ENCODE measurements at regions of chr3 and their contacts with region 1.

Region 1: GRCh38 chr3:170961616-170962400 is 53.4 kb upstream of the EIF5A2 start:
- DNase-seq: peak; percentile 30 to 72
- H3K4me3 ChIP-seq: no peak overlapping the region; the same call in 1 of the 2 replicates
- H3K27ac ChIP-seq: peak overlapping the region; percentile 10
- H3K4me1 ChIP-seq: peaks cover 10% of the 10 kb centered on the region
- H3K27me3 ChIP-seq: no peaks in the 10 kb centered on the region
- CTCF ChIP-seq: peak; percentile 98

Region 2: GRCh38 chr3:170977911-170978310 is 16.1 kb after region 1 on chr3:
- CTCF ChIA-PET with region 1: no interaction called
- POLR2A ChIA-PET with region 1: no interaction called
- intact Hi-C with region 1: no loop called
- DNase-seq: no peak
- H3K4me3 ChIP-seq: no peak overlapping the region
- H3K27ac ChIP-seq: no peak overlapping the region
- H3K4me1 ChIP-seq: no peaks in the 10 kb centered on the region
- H3K27me3 ChIP-seq: no peaks in the 10 kb centered on the region
- CTCF ChIP-seq: no peak

Region 3: DNA sequence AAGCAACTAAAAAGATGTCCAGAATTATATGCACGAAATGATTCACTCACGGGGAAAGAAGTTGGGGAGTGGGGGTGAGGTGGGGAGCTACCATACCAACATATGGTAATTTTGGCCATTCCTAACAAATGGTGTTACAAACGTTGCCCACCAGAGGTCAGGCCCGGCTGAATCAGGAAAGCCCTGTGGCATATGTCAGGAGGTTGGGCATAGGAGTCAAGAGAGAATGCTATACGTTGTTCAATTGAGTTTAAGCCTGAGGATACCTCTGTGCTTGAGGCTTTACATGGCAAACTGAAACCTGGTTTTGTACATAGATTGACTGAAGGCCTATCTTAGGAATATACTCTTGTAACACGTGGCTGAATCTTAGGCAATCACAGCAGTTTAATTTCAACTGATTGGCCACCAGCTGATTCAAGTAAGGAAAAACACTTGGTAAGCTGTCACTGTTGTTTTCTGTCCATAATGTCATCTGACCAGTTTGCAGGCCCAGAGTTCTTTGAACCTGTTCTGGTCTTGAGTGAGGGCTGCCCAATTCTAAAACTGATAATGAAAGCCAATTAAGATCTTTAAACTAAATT is 88.1 kb after region 1 on chr3:
- CTCF ChIA-PET with region 1: no interaction called
- POLR2A ChIA-PET with region 1: no interaction called
- intact Hi-C with region 1: loop called (anchors 5 kb)
- DNase-seq: peak; percentile 53 to 64
- H3K4me3 ChIP-seq: no peak overlapping the region
- H3K27ac ChIP-seq: no peak overlapping the region
- H3K4me1 ChIP-seq: peaks cover 24% of the 10 kb centered on the region
- H3K27me3 ChIP-seq: no peaks in the 10 kb centered on the region
- CTCF ChIP-seq: peak; percentile 86

Region 4: GRCh38 chr3:171187706-171188290 is 226.0 kb after region 1 on chr3:
- CTCF ChIA-PET with region 1: no interaction called
- POLR2A ChIA-PET with region 1: no interaction called
- intact Hi-C with region 1: loop called (anchors 10 kb)
- DNase-seq: peak in 1 of 2 experiments; percentile 50
- H3K4me3 ChIP-seq: no peak overlapping the region
- H3K27ac ChIP-seq: no peak overlapping the region
- H3K4me1 ChIP-seq: peaks cover 44% of the 10 kb centered on the region
- H3K27me3 ChIP-seq: no peaks in the 10 kb centered on the region
- CTCF ChIP-seq: peak; percentile 81

Region 5: DNA sequence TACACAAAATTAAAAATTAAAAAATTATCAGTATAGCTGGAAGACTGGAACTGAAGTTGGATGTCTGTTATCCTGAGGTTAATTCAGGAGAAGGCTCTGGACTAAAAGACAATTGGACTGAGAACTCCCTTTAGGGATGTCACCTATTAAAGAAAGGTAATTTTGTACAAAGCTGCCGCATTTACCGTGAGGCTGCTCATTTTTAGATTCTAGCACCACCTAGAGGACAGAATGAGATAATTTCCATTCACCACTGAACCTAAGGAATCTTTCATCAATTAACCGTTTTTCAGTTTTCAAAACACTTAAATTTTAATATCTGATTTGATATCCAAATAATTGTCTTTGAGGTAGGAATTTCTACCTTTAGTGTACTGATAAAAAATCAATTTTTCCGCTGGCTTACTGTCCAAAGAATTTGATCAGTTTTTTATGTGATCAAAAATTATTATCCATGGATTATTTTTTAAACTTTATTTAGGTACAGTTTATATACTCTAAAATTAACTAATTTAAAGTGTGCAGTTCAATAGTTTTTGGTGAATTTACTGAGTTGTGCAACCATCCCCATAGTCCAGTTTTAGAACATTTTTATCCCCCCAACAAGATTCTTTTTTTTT is 605.1 kb after region 1 on chr3:
- CTCF ChIA-PET with region 1: interaction called, 9 read pairs
- POLR2A ChIA-PET with region 1: interaction called, 5 read pairs
- intact Hi-C with region 1: loop called (anchors 1 kb)
- DNase-seq: peak in 1 of 2 experiments; percentile 45
- H3K4me3 ChIP-seq: no peak overlapping the region
- H3K27ac ChIP-seq: no peak overlapping the region
- H3K4me1 ChIP-seq: peaks cover 30% of the 10 kb centered on the region
- H3K27me3 ChIP-seq: no peaks in the 10 kb centered on the region
- CTCF ChIP-seq: peak; percentile 96

Region 6: GRCh38 chr3:171829841-171830517 is 868.2 kb after region 1 on chr3:
- CTCF ChIA-PET with region 1: interaction called, 13 read pairs
- POLR2A ChIA-PET with region 1: no interaction called
- intact Hi-C with region 1: loop called (anchors 1 kb)
- DNase-seq: peak; percentile 54 to 77
- H3K4me3 ChIP-seq: no peak overlapping the region
- H3K27ac ChIP-seq: no peak overlapping the region
- H3K4me1 ChIP-seq: peaks cover 26% of the 10 kb centered on the region
- H3K27me3 ChIP-seq: no peaks in the 10 kb centered on the region
- CTCF ChIP-seq: peak; percentile 77

Region 7: GRCh38 chr3:172341482-172342059 is 1379.8 kb after region 1 on chr3:
- CTCF ChIA-PET with region 1: no interaction called
- POLR2A ChIA-PET with region 1: no interaction called
- intact Hi-C with region 1: loop called (anchors 1 kb)
- DNase-seq: peak; percentile 24 to 77
- H3K4me3 ChIP-seq: no peak overlapping the region
- H3K27ac ChIP-seq: no peak overlapping the region
- H3K4me1 ChIP-seq: peaks cover 6% of the 10 kb centered on the region; the same call in 1 of the 2 replicates
- H3K27me3 ChIP-seq: no peaks in the 10 kb centered on the region
- CTCF ChIP-seq: peak; percentile 89